ENCODE measurements at regions of chr4 and their contacts with region 1.

Region 1: DNA sequence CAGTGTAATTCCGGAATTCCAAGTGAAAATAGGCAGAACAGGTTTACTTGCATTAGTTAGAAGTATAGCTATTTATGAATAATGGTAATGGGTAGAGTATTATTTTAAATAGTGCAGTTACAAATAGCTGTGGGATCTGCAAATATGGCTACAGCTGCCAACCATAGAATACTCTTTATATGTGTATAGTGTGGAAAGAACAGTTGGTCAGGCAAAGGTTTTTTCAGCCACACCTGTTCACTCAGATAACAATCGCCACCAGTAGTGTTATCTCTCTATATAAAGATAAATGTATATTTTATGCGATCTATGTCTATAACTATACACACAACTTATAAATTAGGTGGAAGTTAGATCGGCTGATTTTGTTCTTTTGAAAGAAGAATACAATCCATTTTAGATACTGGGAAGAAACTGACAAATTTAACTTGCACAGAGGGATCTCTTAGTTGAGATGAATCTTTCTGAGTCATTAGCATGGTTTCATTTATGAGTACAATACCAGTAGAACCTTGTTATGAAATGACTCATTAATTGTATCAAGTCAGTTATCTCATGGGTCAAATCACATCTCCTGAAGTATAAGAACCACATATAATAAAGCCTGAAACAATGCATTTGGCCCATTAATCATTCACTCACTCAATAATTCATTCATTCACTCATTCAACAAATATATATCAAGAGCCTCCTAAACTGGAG is 100.9 kb upstream of the NR3C2 start:
- DNase-seq: peak; percentile 23
- ATAC-seq: no peak
- H3K4me3 ChIP-seq: no peak overlapping the region
- H3K27ac ChIP-seq: no peak overlapping the region
- H3K4me1 ChIP-seq: no peaks in the 10 kb centered on the region
- H3K27me3 ChIP-seq: no peaks in the 10 kb centered on the region
- CTCF ChIP-seq: no peak
- POLR2A ChIP-seq: no peak
- RAD21 ChIP-seq: no peak

Region 2: DNA sequence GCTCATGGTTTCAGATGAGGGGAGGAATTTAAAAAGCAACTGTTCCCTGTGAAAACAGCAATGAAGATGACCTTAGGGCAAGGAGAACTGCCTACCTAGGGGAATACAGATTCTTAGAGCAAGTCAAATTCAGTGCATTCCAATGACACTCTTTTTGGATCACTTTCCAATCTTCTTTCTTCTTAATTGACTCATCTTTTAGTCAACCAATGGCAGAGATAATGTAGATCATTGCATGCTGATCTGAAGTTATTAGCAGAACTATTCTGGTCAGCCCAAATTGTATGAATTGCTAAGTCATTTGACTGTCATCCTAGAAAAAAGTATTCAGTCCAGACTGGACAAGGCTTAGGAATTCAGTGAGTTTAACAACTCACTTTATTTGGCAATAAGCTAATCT is 88.2 kb before region 1 on chr4:
- CTCF ChIA-PET with region 1: no interaction called
- POLR2A ChIA-PET with region 1: no interaction called
- dilution Hi-C with region 1: no loop called
- in situ Hi-C with region 1: no loop called
- intact Hi-C with region 1: loop called (anchors 5 kb)
- DNase-seq: peak; percentile 23
- ATAC-seq: no peak
- H3K4me3 ChIP-seq: no peak overlapping the region
- H3K27ac ChIP-seq: no peak overlapping the region
- H3K4me1 ChIP-seq: no peaks in the 10 kb centered on the region
- H3K27me3 ChIP-seq: no peaks in the 10 kb centered on the region
- CTCF ChIP-seq: no peak
- POLR2A ChIP-seq: no peak
- RAD21 ChIP-seq: no peak

Measured in IMR-90 (cell line).